ENCODE measurements at regions of chr2 and their contacts with region 1.

Region 1: GRCh38 chr2:31170071-31170698 is 31.9 kb upstream of the GALNT14 start:
- DNase-seq: peak; percentile 67
- ATAC-seq: peak; percentile 79
- H3K4me3 Mint-ChIP-seq: no peak overlapping the region
- H3K27ac Mint-ChIP-seq: no peak overlapping the region
- H3K4me1 Mint-ChIP-seq: peaks cover 5% of the 10 kb centered on the region
- H3K27me3 Mint-ChIP-seq: no peaks in the 10 kb centered on the region

Region 2: GRCh38 chr2:30862054-30862651 is 308.0 kb before region 1 on chr2:
- CTCF ChIA-PET with region 1: interaction called, 13 read pairs
- POLR2A ChIA-PET with region 1: no interaction called
- DNase-seq: peak; percentile 58
- ATAC-seq: no peak
- H3K4me3 Mint-ChIP-seq: no peak overlapping the region
- H3K27ac Mint-ChIP-seq: no peak overlapping the region
- H3K4me1 Mint-ChIP-seq: peaks cover 16% of the 10 kb centered on the region
- H3K27me3 Mint-ChIP-seq: peaks cover 11% of the 10 kb centered on the region

Region 3: DNA sequence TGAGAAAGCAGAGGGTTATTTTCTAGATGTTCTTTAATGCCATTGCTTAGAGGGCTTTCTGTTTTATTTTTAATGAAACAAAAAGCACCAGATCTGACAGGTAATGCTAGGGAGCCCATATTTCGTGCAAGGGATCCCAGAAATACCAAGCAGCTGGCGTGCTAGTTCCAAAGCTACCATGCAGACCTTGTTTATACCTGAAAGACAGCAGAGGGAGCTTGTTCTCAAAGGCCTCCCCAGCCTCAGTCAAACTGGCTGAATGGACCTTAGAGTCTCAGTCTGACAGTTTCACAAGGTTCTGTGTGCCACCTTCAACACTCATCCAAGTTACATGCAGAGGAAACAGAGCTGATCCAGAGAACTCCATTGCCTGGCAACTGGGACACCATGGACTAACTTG is 80.5 kb before region 1 on chr2:
- CTCF ChIA-PET with region 1: interaction called, 10 read pairs
- POLR2A ChIA-PET with region 1: no interaction called
- DNase-seq: no peak
- ATAC-seq: no peak
- H3K4me3 Mint-ChIP-seq: no peak overlapping the region
- H3K27ac Mint-ChIP-seq: no peak overlapping the region
- H3K4me1 Mint-ChIP-seq: no peaks in the 10 kb centered on the region
- H3K27me3 Mint-ChIP-seq: peaks cover 2% of the 10 kb centered on the region

Region 4: DNA sequence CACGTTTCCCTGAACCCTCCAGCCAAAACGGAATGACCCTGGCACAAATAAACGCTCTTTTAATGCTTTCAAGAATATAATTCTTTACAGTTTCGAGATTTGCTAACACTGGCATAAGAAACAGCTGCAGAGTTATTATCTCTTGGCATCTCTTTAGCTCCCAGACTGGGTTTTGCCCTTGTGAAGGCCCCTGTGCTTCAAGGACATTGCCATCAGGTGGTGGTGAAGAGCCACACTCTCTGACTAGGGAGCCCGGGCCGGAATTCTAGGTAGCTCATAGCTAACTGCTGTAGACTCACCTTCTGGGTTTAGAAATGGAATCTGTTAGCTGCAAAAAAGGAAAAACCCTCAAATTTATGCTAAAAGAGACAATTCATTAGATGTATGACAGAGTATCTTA is 18.7 kb before region 1 on chr2:
- CTCF ChIA-PET with region 1: interaction called, 16 read pairs
- POLR2A ChIA-PET with region 1: no interaction called
- DNase-seq: no peak
- ATAC-seq: no peak
- H3K4me3 Mint-ChIP-seq: no peak overlapping the region
- H3K27ac Mint-ChIP-seq: no peak overlapping the region
- H3K4me1 Mint-ChIP-seq: no peaks in the 10 kb centered on the region
- H3K27me3 Mint-ChIP-seq: peaks cover 11% of the 10 kb centered on the region

Region 5: DNA sequence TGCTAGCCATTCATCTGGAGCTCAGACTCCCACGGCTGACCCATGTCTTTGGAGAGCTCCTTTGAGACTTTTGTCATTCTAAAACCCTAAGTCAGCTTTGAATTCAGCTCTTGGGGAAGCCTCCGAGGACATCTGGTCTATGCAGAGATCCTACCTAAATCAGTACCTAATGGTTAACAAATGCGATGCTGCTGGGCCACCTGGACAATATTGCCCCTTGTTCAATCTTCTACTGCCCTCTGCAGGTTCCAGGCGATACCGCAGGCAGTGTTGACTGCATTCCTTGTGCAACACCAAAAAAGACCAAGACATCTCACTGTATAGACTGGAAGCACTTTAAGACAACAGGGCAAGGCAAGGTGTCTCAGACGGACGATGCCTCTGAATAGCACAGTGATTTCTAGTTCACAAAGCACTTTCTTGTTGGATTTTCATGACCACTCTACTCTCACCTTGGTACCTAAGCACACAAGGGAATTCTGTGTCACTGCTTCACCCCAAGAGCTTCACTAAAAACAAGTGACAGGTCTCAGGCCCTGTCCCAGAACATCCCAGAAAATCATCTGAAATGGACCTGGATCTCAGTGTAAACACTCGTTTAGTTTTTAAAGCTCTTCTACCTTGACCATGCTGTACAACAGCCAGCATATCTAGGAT is 163.5 kb after region 1 on chr2:
- CTCF ChIA-PET with region 1: interaction called, 44 read pairs
- POLR2A ChIA-PET with region 1: no interaction called
- DNase-seq: peak; percentile 84
- ATAC-seq: peak; percentile 91
- H3K4me3 Mint-ChIP-seq: no peak overlapping the region
- H3K27ac Mint-ChIP-seq: no peak overlapping the region
- H3K4me1 Mint-ChIP-seq: no peaks in the 10 kb centered on the region
- H3K27me3 Mint-ChIP-seq: no peaks in the 10 kb centered on the region